Gastrocnemius medialis (tissue), 4 donors: ENCODE measurements at regions of chr15 and their contacts with region 1.

Region 1: DNA sequence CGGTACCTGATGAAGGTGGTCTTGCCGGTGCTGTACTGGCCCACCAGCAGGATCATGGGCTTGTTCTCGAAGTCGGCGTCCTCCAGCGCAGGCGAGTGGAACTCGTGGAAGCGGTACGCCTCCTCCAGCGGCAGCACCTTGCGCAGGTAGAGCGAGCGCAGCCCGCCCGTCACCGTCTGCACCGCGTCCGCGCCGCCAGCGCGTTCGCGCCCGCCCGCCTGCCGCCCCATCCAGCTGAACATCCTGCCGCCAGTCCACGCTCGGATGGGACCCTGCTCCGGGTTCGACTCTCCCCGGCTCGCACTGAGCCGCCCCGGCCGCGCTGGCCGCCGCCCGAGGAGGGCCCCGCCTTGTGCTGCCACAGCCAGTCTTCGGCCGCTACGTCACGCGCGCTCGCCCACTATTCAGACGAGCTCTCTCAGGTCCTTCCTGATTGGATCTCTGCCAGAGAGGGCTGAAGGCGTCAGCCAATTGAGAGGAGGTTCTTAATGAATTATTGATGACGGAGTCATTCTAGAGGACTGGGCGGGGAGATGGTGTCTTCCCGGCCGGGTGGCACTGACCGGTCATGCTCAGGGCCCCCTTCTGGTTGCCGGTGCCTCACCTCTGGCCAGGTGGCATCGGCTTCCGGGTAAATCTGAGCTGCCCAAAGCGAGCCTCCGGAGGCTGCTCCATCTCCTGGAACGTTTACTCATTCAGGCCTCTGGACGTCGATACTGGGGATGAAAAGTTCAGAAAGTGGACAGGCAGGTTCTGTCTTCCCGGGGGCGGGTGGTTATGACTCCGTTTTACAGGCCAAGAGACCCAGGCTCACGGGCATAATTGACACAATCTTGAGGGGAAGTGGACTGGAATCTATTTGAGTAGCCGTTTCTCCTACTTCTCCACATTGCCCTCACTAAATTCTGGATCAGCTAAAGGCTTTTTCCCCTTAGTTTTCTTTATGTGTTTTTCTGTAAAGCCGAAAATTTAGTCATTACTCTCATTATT is at the start of gene EHD4:
- DNase-seq: peak; percentile 96 to 97
- ATAC-seq: peak; percentile 93 to 95
- H3K4me3 ChIP-seq: peak within 1 kb of the TSS; percentile 62 to 89 (median 82)
- H3K27ac ChIP-seq: peak within 1 kb of the TSS; percentile 66 to 83 (median 78)
- H3K4me1 ChIP-seq: peaks cover 10 to 36% of the 10 kb centered on the region in 2 donors
- H3K27me3 ChIP-seq: no peaks in the 10 kb centered on the region
- CTCF ChIP-seq: peak in 3 of 5 experiments; percentile 42 to 56 (median 46)
- POLR2A ChIP-seq: peak; percentile 79 to 82
- total RNA-seq, gene EHD4: 3.8 to 7.1 (median 4.3) TPM

Region 2: DNA sequence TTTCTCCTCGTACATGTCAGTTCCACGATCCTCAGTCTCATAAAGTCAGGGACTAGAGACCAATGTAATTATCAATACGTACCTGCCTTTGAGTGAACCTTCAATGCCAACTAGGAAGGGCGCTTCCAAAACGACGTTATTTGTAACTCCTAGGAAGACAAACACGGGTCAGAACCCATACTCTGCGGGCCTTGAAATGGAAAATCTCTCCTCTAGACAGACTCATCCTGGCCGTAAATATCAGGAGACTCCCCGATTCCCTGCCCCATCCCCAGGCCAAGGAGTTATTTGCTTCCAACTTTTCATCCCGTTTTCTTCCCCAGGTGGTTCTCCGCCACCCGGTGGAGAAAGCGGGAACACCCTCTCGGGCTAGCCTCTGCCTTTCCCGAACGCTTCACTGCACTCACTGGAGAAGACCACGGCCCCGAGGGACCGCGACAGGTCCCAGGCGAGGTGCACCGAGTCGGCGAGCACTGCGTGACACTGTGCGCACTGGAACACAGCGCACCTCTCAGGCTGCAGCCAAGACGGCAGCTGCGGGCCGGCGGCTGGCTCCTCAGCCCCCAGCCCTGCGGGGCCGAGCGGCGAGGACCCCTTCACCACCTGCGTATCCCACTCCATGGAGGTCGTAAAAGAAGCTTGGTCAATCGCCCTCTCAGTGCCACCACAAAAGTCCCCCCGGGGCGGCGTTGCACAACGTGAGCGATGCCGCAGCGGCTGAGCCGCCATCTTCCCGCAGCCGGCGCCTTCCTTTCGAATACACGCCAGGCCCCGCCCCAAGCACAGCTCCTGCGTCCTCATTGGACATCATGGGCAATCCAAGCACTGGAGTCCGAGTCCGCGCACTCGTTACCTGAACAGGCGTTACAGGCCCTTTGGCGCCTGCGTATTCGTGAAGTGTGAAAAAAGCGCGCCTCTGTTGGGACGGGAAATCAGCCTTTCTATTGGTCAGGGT is 640.4 kb before region 1 on chr15 and contains the start of gene OIP5:
- in situ Hi-C with region 1: no loop called
- intact Hi-C with region 1: no loop called
- DNase-seq: peak; percentile 99
- ATAC-seq: peak; percentile 97 to 98
- H3K4me3 ChIP-seq: peak within 1 kb of the TSS; percentile 88 to 99 (median 94)
- H3K27ac ChIP-seq: peak within 1 kb of the TSS; percentile 82 to 91 (median 88)
- H3K4me1 ChIP-seq: peaks cover 15 to 18% of the 10 kb centered on the region in 2 donors
- H3K27me3 ChIP-seq: no peaks in the 10 kb centered on the region
- CTCF ChIP-seq: peak; percentile 77 to 87 (median 83)
- POLR2A ChIP-seq: no peak
- total RNA-seq, gene OIP5: 1.9 to 7.8 (median 4.0) TPM

Region 3: GRCh38 chr15:41827880-41828806 is 144.4 kb before region 1 on chr15 and contains the start of gene JMJD7:
- in situ Hi-C with region 1: no loop called
- intact Hi-C with region 1: loop called (anchors 1 kb)
- DNase-seq: peak; percentile 88 to 91
- ATAC-seq: peak; percentile 89
- H3K4me3 ChIP-seq: peak within 1 kb of the TSS; percentile 63 to 90 (median 68)
- H3K27ac ChIP-seq: peak within 1 kb of the TSS; percentile 82 to 90 (median 87)
- H3K4me1 ChIP-seq: peaks cover 15 to 18% of the 10 kb centered on the region in 2 donors
- H3K27me3 ChIP-seq: no peaks in the 10 kb centered on the region
- CTCF ChIP-seq: no peak
- POLR2A ChIP-seq: peak; percentile 72 to 77
- total RNA-seq, gene JMJD7: 1.7 to 7.6 (median 3.9) TPM

Region 4: GRCh38 chr15:41881920-41882688 is 90.4 kb before region 1 on chr15:
- in situ Hi-C with region 1: no loop called
- intact Hi-C with region 1: no loop called
- DNase-seq: no peak
- ATAC-seq: peak in 1 of 2 donors; percentile 30
- H3K4me3 ChIP-seq: peak overlapping the region; percentile 34 to 46 (median 40)
- H3K27ac ChIP-seq: no peak overlapping the region
- H3K4me1 ChIP-seq: peaks cover 3 to 7% of the 10 kb centered on the region in 2 donors
- H3K27me3 ChIP-seq: no peaks in the 10 kb centered on the region
- CTCF ChIP-seq: no peak
- POLR2A ChIP-seq: no peak

Region 5: DNA sequence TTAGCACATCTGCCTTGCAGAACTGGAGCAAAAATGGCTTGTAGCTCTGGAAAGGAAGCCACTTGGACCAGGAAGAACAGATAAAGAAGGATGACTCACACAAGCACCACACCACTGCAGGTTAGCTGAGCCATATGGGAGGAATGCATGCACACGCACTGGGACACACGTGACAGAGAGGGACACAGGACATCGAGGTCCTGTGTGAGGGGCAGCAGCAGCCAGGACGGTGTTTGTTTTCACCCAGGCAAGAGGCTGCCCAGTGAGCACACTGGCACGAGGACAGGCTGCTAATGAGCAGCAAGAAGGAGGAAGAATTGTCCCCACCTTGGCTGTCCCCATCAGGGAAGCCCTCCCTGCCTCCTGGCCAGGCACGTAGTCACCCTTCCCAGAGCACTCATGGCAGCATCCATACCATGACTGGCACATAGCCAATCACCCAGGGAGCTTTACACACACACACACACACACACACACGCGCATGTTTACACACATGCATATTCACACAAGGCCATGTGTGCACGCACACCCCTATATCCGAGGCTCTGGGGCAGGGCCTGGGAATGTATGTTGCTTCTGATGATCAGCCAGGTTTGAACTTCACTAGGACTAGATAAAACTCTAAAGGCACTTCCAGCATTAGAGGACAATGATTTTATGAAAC is 54.6 kb before region 1 on chr15:
- in situ Hi-C with region 1: loop called in 1 of 4 experiments (anchors 5 kb)
- intact Hi-C with region 1: loop called (anchors 5 kb)
- DNase-seq: peak; percentile 93
- ATAC-seq: peak; percentile 87 to 90
- H3K4me3 ChIP-seq: no peak overlapping the region
- H3K27ac ChIP-seq: peak overlapping the region; percentile 84 to 87 (median 86)
- H3K4me1 ChIP-seq: peaks cover 62 to 74% of the 10 kb centered on the region in 2 donors
- H3K27me3 ChIP-seq: no peaks in the 10 kb centered on the region
- CTCF ChIP-seq: no peak
- POLR2A ChIP-seq: no peak

Region 6: DNA sequence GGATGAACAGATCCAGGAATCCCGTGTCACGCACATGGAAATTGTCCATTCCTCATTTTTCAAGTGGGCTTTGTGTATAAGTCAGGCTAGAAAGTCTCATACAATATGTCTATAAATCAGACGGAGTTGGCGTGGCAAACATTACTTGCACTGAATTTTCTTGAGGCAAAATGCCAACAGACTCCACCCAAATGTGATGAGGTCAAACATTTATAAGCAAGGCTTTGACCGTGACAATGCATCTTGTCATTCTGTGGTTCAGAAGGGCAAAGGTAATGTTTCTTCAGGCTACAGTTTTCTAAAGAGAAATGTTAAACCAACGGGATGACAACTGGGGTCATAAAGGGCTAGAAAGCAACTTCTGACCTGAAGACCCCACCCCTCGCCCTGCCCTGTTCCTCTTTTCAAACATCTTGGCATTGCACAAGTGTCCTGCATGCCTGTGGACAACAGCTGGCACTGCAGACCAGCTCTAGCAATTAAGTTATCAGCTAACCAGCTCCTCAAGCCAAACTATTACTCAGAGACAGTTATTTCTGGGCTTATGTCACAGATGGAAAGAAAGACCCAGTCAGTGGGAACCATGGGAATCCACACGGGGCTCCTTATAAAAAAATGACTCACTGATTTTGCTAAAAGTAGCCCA is 42.2 kb before region 1 on chr15:
- in situ Hi-C with region 1: no loop called
- intact Hi-C with region 1: loop called (anchors 2 kb)
- DNase-seq: peak; percentile 56 to 67
- ATAC-seq: peak; percentile 67
- H3K4me3 ChIP-seq: no peak overlapping the region
- H3K27ac ChIP-seq: peak overlapping the region in 3 of 4 donors; percentile 26 to 70 (median 62)
- H3K4me1 ChIP-seq: peaks cover 29 to 73% of the 10 kb centered on the region in 2 donors
- H3K27me3 ChIP-seq: no peaks in the 10 kb centered on the region
- CTCF ChIP-seq: peak in 2 of 5 experiments; percentile 17 to 19
- POLR2A ChIP-seq: no peak

Region 7: DNA sequence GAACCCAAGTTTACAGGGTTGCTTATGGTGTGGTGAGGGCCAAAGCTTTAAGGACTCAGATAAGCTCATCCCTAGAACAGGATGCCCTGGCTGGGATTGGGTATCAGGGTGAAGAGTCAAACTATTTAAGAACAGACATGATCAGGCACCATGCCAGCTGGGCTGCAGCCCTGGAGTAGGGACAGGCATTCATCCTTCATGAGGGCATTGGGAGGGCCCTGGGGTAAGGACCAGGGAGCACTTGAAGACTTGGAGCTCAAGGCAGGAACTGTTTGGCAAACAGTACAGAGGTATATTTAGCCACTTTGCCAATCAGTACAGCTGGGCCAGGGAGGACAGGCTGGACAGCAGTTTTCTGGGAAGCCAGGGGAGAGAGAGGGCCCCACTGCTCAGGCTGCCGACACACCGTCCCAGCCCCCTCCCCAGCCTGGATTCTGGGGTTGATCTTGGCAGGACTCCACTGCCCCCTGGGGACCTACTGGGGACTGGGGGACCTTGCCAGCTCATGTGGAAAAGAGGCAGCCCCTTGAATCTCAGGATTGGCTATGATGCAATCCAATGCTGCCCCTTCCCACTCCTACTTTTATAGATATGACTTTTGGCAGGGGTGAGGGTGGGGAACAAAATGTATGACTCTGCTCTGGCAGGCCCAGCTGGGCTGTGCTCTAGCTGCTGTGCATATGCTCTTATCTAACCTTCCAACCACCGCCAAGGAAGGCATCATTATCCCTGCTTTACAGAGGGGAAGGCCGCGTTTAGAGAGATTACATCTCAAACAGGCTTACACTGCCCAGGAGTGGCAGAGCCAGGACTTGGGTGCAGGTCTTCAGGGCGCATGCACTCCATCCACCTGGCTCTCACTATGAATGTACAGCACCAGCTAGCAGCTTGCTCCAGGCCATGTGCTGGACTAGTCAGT is 46.0 kb after region 1 on chr15:
- in situ Hi-C with region 1: no loop called
- intact Hi-C with region 1: no loop called
- DNase-seq: peak; percentile 36 to 72
- ATAC-seq: peak; percentile 78 to 94
- H3K4me3 ChIP-seq: no peak overlapping the region
- H3K27ac ChIP-seq: peak overlapping the region in 3 of 4 donors; percentile 62 to 74 (median 65)
- H3K4me1 ChIP-seq: peaks cover 22 to 27% of the 10 kb centered on the region in 2 donors
- H3K27me3 ChIP-seq: no peaks in the 10 kb centered on the region
- CTCF ChIP-seq: no peak
- POLR2A ChIP-seq: no peak

Region 8: DNA sequence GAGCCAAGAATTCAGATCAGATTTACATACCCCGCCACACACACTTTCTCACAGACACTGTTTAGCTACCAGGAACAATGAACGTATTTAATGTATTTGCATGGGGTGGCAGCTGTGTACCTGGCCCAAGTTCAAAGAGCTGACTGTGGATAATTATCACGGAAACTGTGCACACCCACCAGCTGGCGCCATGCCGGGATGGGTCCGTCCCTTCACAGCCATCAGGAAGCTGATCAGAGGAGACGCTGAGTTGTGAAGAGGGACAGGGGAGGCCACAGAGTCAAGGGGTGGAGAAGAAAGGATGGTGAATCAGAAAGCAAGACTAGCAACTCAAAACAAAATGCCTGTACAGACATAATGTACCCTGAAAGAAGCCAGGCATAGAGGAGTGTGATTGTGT is 134.9 kb after region 1 on chr15:
- in situ Hi-C with region 1: no loop called
- intact Hi-C with region 1: no loop called
- DNase-seq: no peak
- ATAC-seq: no peak
- H3K4me3 ChIP-seq: no peak overlapping the region
- H3K27ac ChIP-seq: no peak overlapping the region
- H3K4me1 ChIP-seq: no peaks in the 10 kb centered on the region
- H3K27me3 ChIP-seq: peaks cover 0 to 3% (median 0%) of the 10 kb centered on the region in 3 donors
- CTCF ChIP-seq: no peak
- POLR2A ChIP-seq: no peak